ENCODE measurements at regions of chr4 and their contacts with region 1.

Region 1: DNA sequence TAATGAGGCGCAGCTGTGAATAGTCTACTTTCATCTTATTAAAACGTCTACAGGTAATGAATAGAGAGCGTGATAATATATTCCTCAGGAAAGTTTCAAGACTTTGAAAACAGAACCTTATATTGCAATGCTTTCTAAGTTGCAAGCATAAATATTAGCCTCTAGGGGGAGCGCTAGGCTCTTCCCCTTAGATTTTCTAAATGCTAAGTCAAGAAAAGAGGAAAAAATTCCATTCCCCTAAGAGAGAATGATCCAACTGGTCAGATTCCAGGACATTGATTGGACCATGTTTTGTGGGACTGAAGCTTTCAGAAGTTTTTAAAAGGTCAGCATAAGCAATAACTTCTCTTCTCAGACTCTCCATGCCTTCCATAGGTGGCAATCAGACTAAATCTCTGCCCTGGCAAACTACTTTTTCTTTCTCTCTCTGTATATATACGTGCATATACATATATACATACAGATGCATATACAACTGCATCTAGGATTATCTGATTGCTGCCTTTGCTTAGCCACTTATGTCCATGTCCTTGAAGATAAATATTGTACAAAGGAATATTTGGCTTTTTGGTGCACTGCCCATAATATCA is 492.9 kb downstream of the INPP4B start:
- DNase-seq: peak in 4 of 5 donors; percentile 39 to 52 (median 45)
- H3K4me3 ChIP-seq: peak overlapping the region in 1 of 2 donors; percentile 1
- H3K4me3 Mint-ChIP-seq: peak overlapping the region; percentile 32 to 83 (median 57)
- H3K27ac ChIP-seq: peak overlapping the region; percentile 57
- H3K27ac Mint-ChIP-seq: peak overlapping the region; percentile 5 to 96 (median 85)
- H3K4me1 ChIP-seq: peaks cover 99% of the 10 kb centered on the region
- H3K4me1 Mint-ChIP-seq: peaks cover 86 to 98% (median 93%) of the 10 kb centered on the region in 4 donors
- H3K27me3 ChIP-seq: no peaks in the 10 kb centered on the region
- H3K27me3 Mint-ChIP-seq: no peaks in the 10 kb centered on the region

Region 2: GRCh38 chr4:142065086-142065647 is 288.1 kb before region 1 on chr4:
- CTCF ChIA-PET with region 1: no interaction called
- POLR2A ChIA-PET with region 1: no interaction called
- intact Hi-C with region 1: no loop called
- DNase-seq: no peak
- H3K4me3 ChIP-seq: no peak overlapping the region
- H3K4me3 Mint-ChIP-seq: no peak overlapping the region
- H3K27ac ChIP-seq: no peak overlapping the region
- H3K27ac Mint-ChIP-seq: peak overlapping the region in 3 of 7 donors; percentile 34 to 67 (median 57)
- H3K4me1 ChIP-seq: no peaks in the 10 kb centered on the region
- H3K4me1 Mint-ChIP-seq: peaks cover 22 to 56% (median 41%) of the 10 kb centered on the region in 4 donors
- H3K27me3 ChIP-seq: no peaks in the 10 kb centered on the region
- H3K27me3 Mint-ChIP-seq: no peaks in the 10 kb centered on the region

Region 3: DNA sequence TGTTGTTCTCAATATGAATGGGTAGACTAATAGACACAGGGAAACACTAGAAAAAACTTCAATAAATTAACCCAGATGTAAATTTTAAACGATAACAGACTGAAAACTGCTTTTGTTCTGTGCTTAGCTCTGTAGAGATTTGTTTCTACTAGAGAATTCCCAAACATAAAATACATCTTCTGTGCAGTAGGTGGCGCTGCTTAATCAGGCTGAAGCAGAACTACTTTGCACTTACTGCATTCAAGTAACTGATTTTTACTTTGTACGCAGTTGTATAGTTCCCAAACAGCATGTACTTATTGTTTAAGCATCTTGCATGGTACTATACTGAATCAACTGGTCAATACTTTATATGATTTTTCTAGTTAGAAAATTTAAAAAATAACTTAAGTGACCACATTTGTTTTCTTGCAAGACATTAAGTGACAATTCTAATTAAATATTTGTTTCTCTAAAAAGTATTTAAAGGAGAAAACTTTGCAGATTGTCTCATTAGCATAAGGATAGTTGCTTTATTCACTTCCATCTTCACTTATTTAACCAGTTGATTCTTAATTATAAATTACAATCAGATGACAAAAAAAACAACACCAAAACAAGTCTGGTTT is 226.2 kb before region 1 on chr4:
- CTCF ChIA-PET with region 1: interaction called, 3 read pairs
- POLR2A ChIA-PET with region 1: no interaction called
- intact Hi-C with region 1: loop called (anchors 2 kb)
- DNase-seq: peak; percentile 61 to 67 (median 65)
- H3K4me3 ChIP-seq: no peak overlapping the region
- H3K4me3 Mint-ChIP-seq: no peak overlapping the region
- H3K27ac ChIP-seq: no peak overlapping the region
- H3K27ac Mint-ChIP-seq: peak overlapping the region in 3 of 7 donors; percentile 54 to 57 (median 54)
- H3K4me1 ChIP-seq: peaks cover 31% of the 10 kb centered on the region
- H3K4me1 Mint-ChIP-seq: peaks cover 19 to 33% (median 26%) of the 10 kb centered on the region in 4 donors
- H3K27me3 ChIP-seq: no peaks in the 10 kb centered on the region
- H3K27me3 Mint-ChIP-seq: no peaks in the 10 kb centered on the region

Region 4: DNA sequence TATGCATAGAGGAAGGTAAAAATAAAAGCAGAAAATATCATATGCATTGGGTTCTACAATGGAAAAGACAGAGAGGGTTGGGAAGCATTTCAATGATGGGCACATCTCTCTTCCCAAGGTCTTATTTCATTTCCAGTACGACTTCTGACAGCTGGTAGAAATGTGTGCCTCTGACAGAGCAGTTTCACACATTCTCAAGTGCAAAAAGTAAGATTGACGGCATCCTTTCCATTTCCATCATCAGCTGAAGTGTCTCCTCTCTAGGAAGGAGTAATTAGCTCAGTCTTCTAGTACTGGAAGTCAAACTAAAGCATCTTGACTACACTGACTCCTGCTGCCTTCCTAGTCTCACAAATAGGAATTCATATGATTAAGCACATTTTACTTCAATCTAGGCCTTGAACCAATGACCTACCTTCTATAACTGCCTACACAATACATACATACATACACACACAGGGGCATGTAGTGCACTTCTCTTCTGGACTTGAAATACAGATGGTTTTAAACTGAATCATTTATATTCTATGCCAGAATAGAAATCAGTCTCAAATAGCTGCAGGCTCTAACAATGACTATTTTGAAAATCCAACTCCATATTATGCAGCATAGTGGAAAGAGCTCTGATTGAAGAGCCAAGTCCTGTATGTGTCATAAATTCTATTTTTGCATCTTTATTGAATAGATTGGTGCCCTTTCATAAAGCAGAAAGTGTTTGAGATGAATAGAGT is 19.5 kb after region 1 on chr4:
- CTCF ChIA-PET with region 1: interaction called, 24 read pairs
- POLR2A ChIA-PET with region 1: interaction called, 50 read pairs
- intact Hi-C with region 1: loop called (anchors 2 kb)
- DNase-seq: no peak
- H3K4me3 ChIP-seq: no peak overlapping the region
- H3K4me3 Mint-ChIP-seq: peak overlapping the region in 7 of 8 donors; percentile 8 to 81 (median 61)
- H3K27ac ChIP-seq: peak overlapping the region; percentile 7
- H3K27ac Mint-ChIP-seq: peak overlapping the region; percentile 5 to 88 (median 75)
- H3K4me1 ChIP-seq: peaks cover 98% of the 10 kb centered on the region
- H3K4me1 Mint-ChIP-seq: peaks cover 69 to 86% (median 77%) of the 10 kb centered on the region in 4 donors
- H3K27me3 ChIP-seq: no peaks in the 10 kb centered on the region
- H3K27me3 Mint-ChIP-seq: no peaks in the 10 kb centered on the region

Region 5: GRCh38 chr4:142405021-142405694 is 51.9 kb after region 1 on chr4:
- CTCF ChIA-PET with region 1: interaction called, 96 read pairs
- POLR2A ChIA-PET with region 1: interaction called, 88 read pairs
- intact Hi-C with region 1: loop called (anchors 1 kb)
- DNase-seq: peak; percentile 64 to 81 (median 68)
- H3K4me3 ChIP-seq: peak overlapping the region; percentile 69 to 70
- H3K4me3 Mint-ChIP-seq: peak overlapping the region; percentile 95 to 100 (median 98)
- H3K27ac ChIP-seq: peak overlapping the region; percentile 72
- H3K27ac Mint-ChIP-seq: peak overlapping the region; percentile 91 to 98 (median 95)
- H3K4me1 ChIP-seq: peaks cover 38% of the 10 kb centered on the region
- H3K4me1 Mint-ChIP-seq: peaks cover 26 to 72% (median 36%) of the 10 kb centered on the region in 4 donors
- H3K27me3 ChIP-seq: no peaks in the 10 kb centered on the region
- H3K27me3 Mint-ChIP-seq: no peaks in the 10 kb centered on the region

Region 6: GRCh38 chr4:142558851-142559250 is 205.6 kb after region 1 on chr4:
- CTCF ChIA-PET with region 1: interaction called, 11 read pairs
- POLR2A ChIA-PET with region 1: interaction called, 15 read pairs
- intact Hi-C with region 1: no loop called
- DNase-seq: no peak
- H3K4me3 ChIP-seq: peak overlapping the region in 1 of 2 donors; percentile 19
- H3K4me3 Mint-ChIP-seq: peak overlapping the region; percentile 18 to 82 (median 52)
- H3K27ac ChIP-seq: peak overlapping the region; percentile 28
- H3K27ac Mint-ChIP-seq: peak overlapping the region in 5 of 7 donors; percentile 52 to 87 (median 78)
- H3K4me1 ChIP-seq: peaks cover 85% of the 10 kb centered on the region
- H3K4me1 Mint-ChIP-seq: peaks cover 63 to 86% (median 71%) of the 10 kb centered on the region in 4 donors
- H3K27me3 ChIP-seq: no peaks in the 10 kb centered on the region
- H3K27me3 Mint-ChIP-seq: no peaks in the 10 kb centered on the region

Region 7: GRCh38 chr4:142703694-142704309 is 350.6 kb after region 1 on chr4:
- CTCF ChIA-PET with region 1: interaction called, 12 read pairs
- POLR2A ChIA-PET with region 1: interaction called, 34 read pairs
- intact Hi-C with region 1: loop called (anchors 5 kb)
- DNase-seq: peak; percentile 62 to 77 (median 71)
- H3K4me3 ChIP-seq: peak overlapping the region; percentile 3 to 11
- H3K4me3 Mint-ChIP-seq: no peak overlapping the region
- H3K27ac ChIP-seq: peak overlapping the region; percentile 38
- H3K27ac Mint-ChIP-seq: no peak overlapping the region
- H3K4me1 ChIP-seq: peaks cover 95% of the 10 kb centered on the region
- H3K4me1 Mint-ChIP-seq: peaks cover 30 to 33% (median 31%) of the 10 kb centered on the region in 4 donors
- H3K27me3 ChIP-seq: no peaks in the 10 kb centered on the region
- H3K27me3 Mint-ChIP-seq: no peaks in the 10 kb centered on the region

Region 8: DNA sequence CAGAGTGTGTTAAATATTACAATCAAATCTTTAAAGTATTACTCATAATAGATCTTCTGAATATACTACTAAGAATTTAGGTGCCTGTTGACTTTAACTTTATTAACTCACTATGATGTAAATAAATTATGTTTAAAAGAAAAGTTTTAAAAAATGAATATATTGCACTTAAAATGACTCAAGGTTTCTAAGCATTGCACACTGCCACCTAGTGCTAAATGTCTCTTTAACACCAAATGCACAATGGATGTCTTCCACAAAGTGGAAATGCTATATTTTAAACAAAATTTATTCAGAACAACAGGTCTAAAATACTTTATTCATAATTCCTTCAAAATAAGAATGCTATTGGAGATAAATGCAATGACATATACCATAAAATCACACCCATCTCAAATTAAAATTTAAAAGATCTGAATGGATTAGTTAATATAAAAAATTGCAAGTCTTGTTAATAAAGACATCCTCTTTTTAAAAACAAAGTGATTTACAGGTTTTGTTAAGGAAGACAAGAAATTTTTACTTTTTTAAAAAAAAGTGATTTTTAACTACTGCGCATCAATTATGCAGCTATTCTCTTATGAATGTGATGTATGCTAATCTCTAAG is 487.4 kb after region 1 on chr4:
- CTCF ChIA-PET with region 1: interaction called, 3 read pairs
- POLR2A ChIA-PET with region 1: no interaction called
- intact Hi-C with region 1: loop called (anchors 1 kb)
- DNase-seq: peak in 4 of 5 donors; percentile 26 to 42 (median 36)
- H3K4me3 ChIP-seq: no peak overlapping the region
- H3K4me3 Mint-ChIP-seq: no peak overlapping the region
- H3K27ac ChIP-seq: no peak overlapping the region
- H3K27ac Mint-ChIP-seq: no peak overlapping the region
- H3K4me1 ChIP-seq: peaks cover 12% of the 10 kb centered on the region
- H3K4me1 Mint-ChIP-seq: peaks cover 8 to 13% (median 11%) of the 10 kb centered on the region in 4 donors
- H3K27me3 ChIP-seq: no peaks in the 10 kb centered on the region
- H3K27me3 Mint-ChIP-seq: peaks cover 5 to 6% of the 10 kb centered on the region in 2 donors